ENCODE measurements at regions of chr9 and their contacts with region 1.

Region 1: DNA sequence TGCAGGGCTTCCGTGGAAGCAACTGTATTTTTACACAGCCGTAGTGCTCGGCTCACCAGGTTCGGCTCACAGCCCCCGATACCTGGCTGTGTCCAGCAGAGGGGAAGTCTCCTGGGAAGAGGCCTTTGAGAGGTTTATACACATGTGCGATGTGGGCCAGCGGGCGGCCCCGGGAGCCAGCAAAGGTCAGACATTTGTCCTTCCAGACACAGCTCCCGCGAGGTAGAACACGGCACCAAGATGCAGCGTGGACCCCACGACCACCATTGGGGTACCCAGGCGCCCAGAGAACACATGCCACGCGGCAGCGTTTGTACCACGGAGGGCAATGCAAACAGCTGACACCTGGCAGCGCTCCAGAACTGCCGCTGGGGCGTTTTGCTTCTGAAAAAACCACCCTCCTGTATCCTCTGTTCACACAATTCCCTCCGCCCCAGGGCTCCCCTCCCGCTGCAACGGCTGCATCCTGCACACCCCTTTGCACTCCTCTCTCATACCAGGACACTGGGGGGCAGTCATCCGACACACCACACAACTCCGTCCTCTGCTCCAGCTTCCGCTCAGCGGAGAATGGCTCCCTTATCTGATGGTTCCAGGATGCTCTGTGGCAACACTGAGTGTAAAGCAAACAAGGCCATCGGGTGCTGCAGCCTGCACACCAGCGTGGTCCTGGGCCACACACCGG is 235.3 kb downstream of the SYK start:
- DNase-seq: peak; percentile 75 to 81
- ATAC-seq: peak; percentile 91 to 98 (median 96)
- H3K4me3 ChIP-seq: peak overlapping the region in 2 of 10 donors; percentile 25 to 29
- H3K27ac ChIP-seq: peak overlapping the region in 2 of 10 donors; percentile 10 to 74
- H3K4me1 ChIP-seq: peaks cover 6 to 20% (median 15%) of the 10 kb centered on the region in 9 donors
- H3K27me3 ChIP-seq: peaks cover 0 to 11% (median 0%) of the 10 kb centered on the region in 7 donors
- CTCF ChIP-seq: peak; percentile 41 to 83 (median 74)

Region 2: GRCh38 chr9:90914868-90915483 is 122.0 kb before region 1 on chr9:
- intact Hi-C with region 1: loop called in 2 of 10 experiments (anchors 5 kb)
- DNase-seq: peak; percentile 62 to 66
- ATAC-seq: peak; percentile 79 to 95 (median 87)
- H3K4me3 ChIP-seq: no peak overlapping the region
- H3K27ac ChIP-seq: no peak overlapping the region
- H3K4me1 ChIP-seq: peaks cover 0 to 5% (median 1%) of the 10 kb centered on the region in 9 donors
- H3K27me3 ChIP-seq: peaks cover 0 to 13% (median 0%) of the 10 kb centered on the region in 7 donors
- CTCF ChIP-seq: peak; percentile 81 to 92 (median 92)

Region 3: DNA sequence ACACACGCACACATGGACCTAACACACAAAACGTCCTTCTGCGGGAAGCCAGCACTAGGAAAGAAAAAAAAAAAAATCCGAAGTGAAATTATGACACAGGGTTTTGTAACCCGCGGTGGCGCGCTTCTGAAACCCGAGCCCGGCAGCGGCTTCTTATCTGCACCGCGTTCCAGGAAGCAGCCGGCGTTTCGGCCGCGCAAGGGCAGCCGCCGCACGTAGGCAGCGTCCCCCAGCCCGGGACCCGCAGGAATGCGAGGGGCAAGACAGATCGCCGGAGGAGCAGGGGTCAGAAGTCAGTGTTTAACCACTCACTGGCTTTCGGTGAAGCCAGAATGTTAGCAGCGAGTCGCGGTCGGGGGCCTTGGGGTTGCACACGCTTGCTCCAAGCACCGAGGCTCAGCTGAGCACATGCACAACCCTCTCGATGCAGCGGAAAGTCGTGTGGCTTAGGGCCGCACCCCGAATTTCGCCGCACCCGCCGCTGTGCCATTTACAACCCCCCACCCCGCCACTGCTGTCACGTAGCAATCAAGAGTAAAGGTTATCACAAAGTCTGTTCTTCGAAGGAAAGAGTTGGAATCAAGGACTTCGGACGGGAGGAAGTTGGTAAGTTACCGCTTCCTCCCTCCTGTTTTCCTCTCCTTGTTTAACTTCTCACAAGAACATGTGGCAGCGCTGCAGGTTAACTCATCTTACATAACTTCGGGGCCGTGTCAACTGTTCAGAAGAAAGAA is 156.9 kb after region 1 on chr9:
- intact Hi-C with region 1: loop called in 3 of 10 experiments (anchors 2 to 10 kb)
- DNase-seq: peak; percentile 83 to 85
- ATAC-seq: peak; percentile 57 to 84 (median 74)
- H3K4me3 ChIP-seq: peak overlapping the region in 9 of 10 donors; percentile 28 to 60 (median 53)
- H3K27ac ChIP-seq: peak overlapping the region; percentile 90 to 100 (median 98)
- H3K4me1 ChIP-seq: peaks cover 0 to 72% (median 48%) of the 10 kb centered on the region in 9 donors
- H3K27me3 ChIP-seq: no peaks in the 10 kb centered on the region
- CTCF ChIP-seq: peak in 1 of 9 donors; percentile 29

Region 4: DNA sequence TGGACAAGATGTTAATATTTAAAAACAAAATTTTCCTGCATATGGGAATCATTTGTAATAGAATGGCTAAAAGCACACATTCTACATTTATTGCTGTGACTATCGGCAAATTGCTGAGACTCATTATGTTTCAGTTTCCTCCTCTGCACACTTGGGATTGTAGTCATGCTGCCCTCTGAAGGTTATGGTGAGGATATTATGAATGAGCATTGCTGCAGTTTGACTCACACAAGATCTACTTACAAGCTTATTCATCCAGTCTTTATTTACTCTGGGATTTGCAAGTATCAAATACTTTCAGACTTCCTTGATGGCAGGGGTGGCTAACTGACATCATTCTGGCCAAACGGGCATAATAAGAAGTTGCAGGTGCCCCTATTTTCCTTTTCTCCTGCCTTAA is 396.2 kb after region 1 on chr9:
- intact Hi-C with region 1: loop called in 8 of 10 experiments (anchors 2 to 10 kb)
- DNase-seq: no peak
- ATAC-seq: peak in 6 of 8 donors; percentile 62 to 74 (median 68)
- H3K4me3 ChIP-seq: no peak overlapping the region
- H3K27ac ChIP-seq: no peak overlapping the region
- H3K4me1 ChIP-seq: peaks cover 0 to 20% (median 0%) of the 10 kb centered on the region in 9 donors
- H3K27me3 ChIP-seq: no peaks in the 10 kb centered on the region
- CTCF ChIP-seq: peak in 8 of 9 donors; percentile 19 to 70 (median 58)

Region 5: GRCh38 chr9:91676046-91676445 is 639.1 kb after region 1 on chr9:
- intact Hi-C with region 1: loop called in 4 of 10 experiments (anchors 5 to 10 kb)
- DNase-seq: no peak
- ATAC-seq: peak in 2 of 8 donors; percentile 35 to 52
- H3K4me3 ChIP-seq: no peak overlapping the region
- H3K27ac ChIP-seq: no peak overlapping the region
- H3K4me1 ChIP-seq: no peaks in the 10 kb centered on the region
- H3K27me3 ChIP-seq: peaks cover 0 to 5% (median under 1%) of the 10 kb centered on the region in 7 donors
- CTCF ChIP-seq: peak in 5 of 9 donors; percentile 17 to 44 (median 36)

Region 6: DNA sequence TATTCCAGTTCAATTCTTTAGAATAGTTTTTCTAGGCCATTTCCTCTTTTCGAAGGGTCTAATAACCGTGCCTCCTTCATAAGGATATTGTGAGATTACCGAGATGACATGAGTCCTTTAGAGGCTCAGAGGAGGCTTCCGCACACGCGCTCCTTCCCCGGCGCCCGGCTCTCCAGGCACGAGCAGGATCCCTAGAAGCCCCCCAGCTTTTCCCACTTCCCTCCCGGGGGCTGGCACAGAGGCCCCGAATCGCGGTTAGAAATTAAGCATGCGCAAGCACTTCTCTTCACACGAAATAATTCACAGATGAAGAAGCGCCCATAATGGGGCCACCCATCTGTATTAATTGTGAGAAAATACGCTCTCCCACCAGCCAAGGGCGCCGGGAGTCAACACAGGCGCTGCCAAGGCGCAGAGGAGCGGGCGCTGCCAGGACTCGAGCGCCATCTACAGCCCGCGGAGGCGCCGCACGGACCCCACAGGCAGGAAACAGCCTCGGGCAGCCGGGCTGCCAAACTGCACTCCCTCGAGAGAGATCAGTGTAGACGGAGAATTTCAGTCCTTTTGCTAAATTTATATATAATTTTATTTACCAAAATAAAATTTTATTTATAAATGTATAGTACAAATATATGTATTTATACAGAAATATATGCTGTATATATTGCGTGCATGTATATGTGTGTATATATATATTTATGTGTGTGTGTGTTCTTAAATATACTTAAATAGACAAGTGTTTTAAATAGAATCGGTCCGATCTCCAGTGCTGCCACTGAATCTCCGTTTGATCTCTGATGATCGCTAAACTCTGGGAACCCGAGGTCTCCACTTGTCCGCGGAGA is 644.7 kb after region 1 on chr9:
- intact Hi-C with region 1: loop called in 4 of 10 experiments (anchors 5 to 10 kb)
- DNase-seq: peak; percentile 68 to 81
- ATAC-seq: peak; percentile 90 to 97 (median 95)
- H3K4me3 ChIP-seq: peak overlapping the region in 4 of 10 donors; percentile 6 to 30 (median 24)
- H3K27ac ChIP-seq: no peak overlapping the region
- H3K4me1 ChIP-seq: peaks cover 0 to 9% (median 0%) of the 10 kb centered on the region in 9 donors
- H3K27me3 ChIP-seq: peaks cover 0 to 21% (median 3%) of the 10 kb centered on the region in 7 donors
- CTCF ChIP-seq: peak; percentile 64 to 94 (median 87)

Region 7: DNA sequence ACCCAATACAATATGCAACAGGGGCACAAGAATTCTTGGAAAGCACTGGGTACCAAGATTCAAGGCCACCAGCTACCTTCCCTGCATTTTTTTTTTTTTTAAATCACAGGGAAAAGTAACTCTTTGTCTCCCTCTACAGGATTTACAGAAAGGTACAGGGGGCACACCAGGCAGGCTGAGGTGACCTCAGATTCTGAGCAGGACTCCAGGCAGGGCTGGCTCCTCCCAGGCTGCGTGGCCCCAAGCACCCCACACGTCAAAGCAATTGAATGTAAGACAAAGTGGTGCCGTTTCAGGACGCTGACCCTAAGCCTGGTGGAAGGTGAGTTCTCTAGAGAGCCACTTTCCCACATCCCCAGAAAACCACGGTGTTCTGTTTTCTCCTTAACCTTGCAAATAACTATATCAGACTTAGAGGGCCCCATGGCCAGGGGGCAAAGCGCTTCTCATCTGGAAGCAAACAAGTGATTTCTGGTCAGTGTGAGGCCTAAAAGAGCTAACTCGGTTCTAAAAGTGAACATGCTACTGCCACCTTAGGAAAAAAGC is 690.4 kb after region 1 on chr9:
- intact Hi-C with region 1: loop called in 2 of 10 experiments (anchors 10 kb)
- DNase-seq: no peak
- ATAC-seq: peak; percentile 43 to 74 (median 60)
- H3K4me3 ChIP-seq: no peak overlapping the region
- H3K27ac ChIP-seq: peak overlapping the region in 4 of 10 donors; percentile 17 to 42 (median 32)
- H3K4me1 ChIP-seq: peaks cover 0 to 9% (median 0%) of the 10 kb centered on the region in 9 donors
- H3K27me3 ChIP-seq: no peaks in the 10 kb centered on the region
- CTCF ChIP-seq: peak; percentile 40 to 74 (median 70)